Activated T-helper 1 cell treated with anti-CD3 and anti-CD28 coated beads, Interleukin-12 subunit alpha, Interleukin-12 subunit beta, Interleukin-2, Interleukin-4 antibody, amounts not matched to agents 30 ng/mL and 10 ng/mL and 1 ng/mL, durations not matched to agents 14 hours and 24 hours and 36 hours (primary cell): ENCODE measurements at regions of chr5 and their contacts with region 1.

Region 1: GRCh38 chr5:80083101-80083890 is 48.1 kb downstream of the THBS4 start:
- DNase-seq: no peak
- H3K4me3 Mint-ChIP-seq: peak overlapping the region; percentile 83
- H3K27ac Mint-ChIP-seq: peak overlapping the region; percentile 93
- H3K4me1 Mint-ChIP-seq: peaks cover 19% of the 10 kb centered on the region
- H3K27me3 Mint-ChIP-seq: peaks cover 4% of the 10 kb centered on the region

Region 2: GRCh38 chr5:79133657-79134451 is 949.4 kb before region 1 on chr5:
- intact Hi-C with region 1: loop called (anchors 1 kb)
- DNase-seq: peak; percentile 28
- H3K4me3 Mint-ChIP-seq: peak overlapping the region; percentile 64
- H3K27ac Mint-ChIP-seq: peak overlapping the region; percentile 80
- H3K4me1 Mint-ChIP-seq: peaks cover 10% of the 10 kb centered on the region
- H3K27me3 Mint-ChIP-seq: peaks cover 5% of the 10 kb centered on the region

Region 3: DNA sequence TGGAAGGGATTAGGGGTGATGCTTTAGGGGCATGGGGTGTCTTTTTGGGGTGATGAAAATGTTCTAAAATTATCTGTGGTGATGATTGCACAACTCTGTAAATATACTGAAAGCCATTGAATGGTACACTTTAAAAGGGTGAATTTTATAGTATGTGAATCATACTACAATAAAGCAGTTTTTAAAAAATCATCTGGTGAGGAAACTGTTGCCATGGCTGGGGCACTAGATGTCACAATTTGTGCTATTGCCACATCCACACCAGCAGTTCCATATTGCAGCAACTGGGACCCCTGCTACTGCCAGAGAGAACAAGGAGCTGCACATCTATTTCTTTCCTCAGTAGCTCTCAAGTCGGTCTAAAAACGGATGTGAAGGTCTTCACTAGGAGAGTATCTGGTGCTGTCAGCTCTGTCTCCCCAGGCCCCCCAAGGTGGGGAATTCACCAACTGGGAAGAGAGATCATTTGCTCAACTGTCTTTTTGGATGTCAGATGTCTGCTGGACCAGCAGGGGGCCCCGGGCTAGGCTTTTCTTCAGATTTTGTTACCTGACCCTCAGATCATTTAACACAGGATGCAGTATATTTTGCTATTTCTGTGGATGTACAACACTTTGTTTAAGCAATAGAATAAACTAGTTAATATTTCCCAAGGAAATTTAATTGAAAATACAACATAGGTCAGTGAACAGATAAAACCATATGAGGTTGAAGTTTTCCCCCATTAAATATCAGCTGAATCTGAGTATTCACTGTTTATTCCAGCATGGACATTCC is 380.5 kb before region 1 on chr5:
- intact Hi-C with region 1: loop called (anchors 1 kb)
- DNase-seq: no peak
- H3K4me3 Mint-ChIP-seq: no peak overlapping the region
- H3K27ac Mint-ChIP-seq: no peak overlapping the region
- H3K4me1 Mint-ChIP-seq: peaks cover 22% of the 10 kb centered on the region
- H3K27me3 Mint-ChIP-seq: peaks cover 4% of the 10 kb centered on the region

Region 4: DNA sequence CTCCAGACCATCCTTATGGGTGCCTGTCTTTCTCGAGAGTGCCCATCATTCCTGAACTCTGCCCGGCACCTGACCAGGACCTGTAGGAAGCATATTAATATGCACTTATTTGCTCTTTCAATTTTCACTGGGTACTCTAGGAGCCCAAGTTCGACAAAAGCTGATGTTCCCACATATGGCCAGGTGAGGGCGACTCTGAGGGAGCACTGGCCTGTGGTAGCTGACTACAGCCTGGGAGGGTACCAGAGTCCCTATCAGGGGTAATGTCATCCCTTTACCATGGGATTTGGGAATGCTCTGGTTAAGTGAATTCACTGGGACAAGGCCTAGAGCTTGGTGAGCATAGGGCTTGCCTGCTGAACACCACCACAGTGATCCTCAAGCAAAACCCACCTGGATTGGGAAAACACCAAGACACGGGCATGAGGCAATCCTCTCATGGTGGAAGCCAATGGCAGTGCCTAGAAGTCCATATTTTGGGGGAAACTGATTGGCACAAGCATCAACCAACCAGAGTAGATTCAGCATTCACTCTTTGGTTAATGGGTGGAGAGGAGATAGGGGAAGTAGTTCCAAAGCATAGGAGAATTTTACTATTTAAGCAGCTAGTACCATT is 204.5 kb before region 1 on chr5:
- intact Hi-C with region 1: loop called (anchors 1 kb)
- DNase-seq: peak; percentile 6
- H3K4me3 Mint-ChIP-seq: no peak overlapping the region
- H3K27ac Mint-ChIP-seq: no peak overlapping the region
- H3K4me1 Mint-ChIP-seq: no peaks in the 10 kb centered on the region
- H3K27me3 Mint-ChIP-seq: no peaks in the 10 kb centered on the region

Region 5: DNA sequence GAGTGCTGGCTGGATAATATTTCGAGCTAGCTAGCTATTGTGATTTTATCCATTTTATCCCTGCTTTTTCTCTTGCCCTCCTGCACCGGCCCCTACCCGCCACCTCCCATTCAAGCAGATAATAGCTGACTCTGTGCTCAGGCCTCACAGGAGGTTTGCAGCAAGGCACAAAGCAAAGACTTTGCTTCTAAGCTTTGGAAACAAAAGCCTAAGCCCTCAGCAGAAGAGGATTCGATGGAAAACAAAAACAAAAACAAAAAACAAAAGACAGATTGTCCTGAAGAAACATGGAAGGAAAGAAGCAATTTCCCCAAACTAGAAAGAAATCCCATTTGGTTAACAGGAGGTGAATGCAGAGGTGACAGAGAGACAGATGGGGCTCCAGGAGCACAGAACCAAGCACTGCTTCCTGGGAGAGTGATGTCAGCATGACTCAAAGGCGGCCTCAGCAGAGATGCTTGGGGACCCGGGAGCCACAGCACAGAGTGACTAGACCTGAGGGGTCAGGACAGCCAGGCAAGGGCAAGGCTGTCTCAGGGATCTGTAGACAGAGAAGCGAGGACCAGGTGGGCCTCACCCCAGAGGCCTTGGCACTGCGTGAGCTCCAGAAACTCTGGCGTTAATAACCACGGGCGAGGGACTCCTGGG is 120.6 kb before region 1 on chr5:
- intact Hi-C with region 1: loop called (anchors 1 kb)
- DNase-seq: peak; percentile 29
- H3K4me3 Mint-ChIP-seq: peak overlapping the region; percentile 35
- H3K27ac Mint-ChIP-seq: peak overlapping the region; percentile 85
- H3K4me1 Mint-ChIP-seq: peaks cover 39% of the 10 kb centered on the region
- H3K27me3 Mint-ChIP-seq: no peaks in the 10 kb centered on the region

Region 6: DNA sequence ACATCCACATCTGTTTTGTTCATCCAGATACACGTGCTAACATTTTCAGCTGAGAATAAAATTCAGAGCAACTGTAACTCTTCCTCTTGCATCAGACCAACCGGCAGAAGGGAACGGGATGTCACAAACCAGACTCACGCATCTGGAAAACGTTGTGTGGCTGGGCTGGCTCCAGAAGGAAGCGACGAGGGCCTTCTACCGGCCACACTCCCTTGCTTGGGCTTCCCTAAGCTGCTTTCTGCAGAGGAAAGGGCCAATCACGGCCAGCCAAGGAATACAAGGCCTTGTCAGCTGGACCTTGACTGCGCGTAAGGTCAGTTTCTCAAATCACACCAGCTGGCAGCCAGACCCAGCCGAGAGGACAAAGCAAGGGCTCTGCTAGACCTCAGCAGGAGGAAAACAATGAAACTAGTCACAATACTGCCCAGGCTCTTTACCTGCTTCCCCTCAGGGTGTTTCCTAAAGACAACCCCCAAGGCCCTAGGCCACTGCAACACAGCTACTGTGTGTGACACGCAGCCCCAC is 57.9 kb after region 1 on chr5:
- intact Hi-C with region 1: no loop called
- DNase-seq: no peak
- H3K4me3 Mint-ChIP-seq: no peak overlapping the region
- H3K27ac Mint-ChIP-seq: peak overlapping the region; percentile 77
- H3K4me1 Mint-ChIP-seq: peaks cover 64% of the 10 kb centered on the region
- H3K27me3 Mint-ChIP-seq: no peaks in the 10 kb centered on the region